BJ (cell line): ENCODE measurements at regions of chr6 and their contacts with region 1.

Region 1: GRCh38 chr6:36851149-36851614 is 11.9 kb upstream of the CPNE5 start:
- DNase-seq: peak; percentile 58
- H3K4me3 ChIP-seq: no peak overlapping the region
- H3K27me3 ChIP-seq: no peaks in the 10 kb centered on the region
- CTCF ChIP-seq: peak; percentile 73

Region 2: DNA sequence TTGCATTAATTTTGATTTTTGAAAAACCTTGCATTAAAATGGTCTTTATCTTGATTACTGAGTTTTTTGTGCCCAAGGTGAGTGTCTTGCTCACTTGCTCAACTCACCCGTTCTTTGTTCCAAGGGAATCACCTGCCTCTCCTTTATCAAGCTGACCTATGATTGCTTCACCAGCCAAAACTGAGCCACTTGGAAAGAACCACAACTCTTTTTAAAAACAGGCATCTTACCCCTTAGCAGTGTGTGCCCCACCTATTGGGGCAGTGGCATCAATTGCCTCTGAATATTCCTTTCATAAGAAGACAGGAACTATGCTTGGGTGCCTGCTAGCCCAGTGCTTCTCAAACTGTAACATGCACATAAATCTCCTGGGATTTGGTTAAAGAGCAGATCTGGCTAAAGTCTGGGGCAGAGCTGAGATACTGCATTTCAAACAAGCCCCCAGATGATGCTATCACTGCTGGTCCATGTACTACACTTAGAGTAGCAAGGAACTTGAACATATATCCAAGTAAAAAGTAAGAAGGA is 300.6 kb before region 1 on chr6:
- CTCF ChIA-PET with region 1: no interaction called
- POLR2A ChIA-PET with region 1: no interaction called
- DNase-seq: no peak
- H3K4me3 ChIP-seq: no peak overlapping the region
- H3K27me3 ChIP-seq: no peaks in the 10 kb centered on the region
- CTCF ChIP-seq: no peak

Region 3: GRCh38 chr6:36759148-36759759 is 91.9 kb before region 1 on chr6:
- CTCF ChIA-PET with region 1: interaction called, 194 read pairs
- POLR2A ChIA-PET with region 1: no interaction called
- DNase-seq: no peak
- H3K4me3 ChIP-seq: no peak overlapping the region
- H3K27me3 ChIP-seq: peaks cover 2% of the 10 kb centered on the region
- CTCF ChIP-seq: peak; percentile 100

Region 4: DNA sequence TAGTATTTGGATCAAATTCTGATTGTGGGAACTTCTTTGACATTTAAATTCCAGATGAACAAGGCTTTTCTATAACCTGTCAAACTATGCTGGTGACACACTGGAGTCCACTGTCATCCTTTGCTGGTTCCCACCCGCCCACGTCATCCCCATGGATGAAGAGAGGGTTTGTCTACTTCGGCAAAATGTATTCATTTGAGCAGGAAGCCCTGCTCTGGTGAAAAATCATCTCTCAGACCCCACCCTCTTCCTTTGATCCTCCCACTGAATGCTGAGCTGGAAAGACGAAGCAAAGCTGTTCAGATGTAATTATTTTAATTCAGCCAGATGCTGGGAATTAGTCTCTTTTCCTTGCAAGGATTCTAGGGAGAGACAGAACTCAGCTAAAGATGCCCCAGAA is 62.4 kb before region 1 on chr6:
- CTCF ChIA-PET with region 1: interaction called, 18 read pairs
- POLR2A ChIA-PET with region 1: no interaction called
- DNase-seq: no peak
- H3K4me3 ChIP-seq: no peak overlapping the region
- H3K27me3 ChIP-seq: peaks cover 27% of the 10 kb centered on the region
- CTCF ChIP-seq: no peak

Region 5: DNA sequence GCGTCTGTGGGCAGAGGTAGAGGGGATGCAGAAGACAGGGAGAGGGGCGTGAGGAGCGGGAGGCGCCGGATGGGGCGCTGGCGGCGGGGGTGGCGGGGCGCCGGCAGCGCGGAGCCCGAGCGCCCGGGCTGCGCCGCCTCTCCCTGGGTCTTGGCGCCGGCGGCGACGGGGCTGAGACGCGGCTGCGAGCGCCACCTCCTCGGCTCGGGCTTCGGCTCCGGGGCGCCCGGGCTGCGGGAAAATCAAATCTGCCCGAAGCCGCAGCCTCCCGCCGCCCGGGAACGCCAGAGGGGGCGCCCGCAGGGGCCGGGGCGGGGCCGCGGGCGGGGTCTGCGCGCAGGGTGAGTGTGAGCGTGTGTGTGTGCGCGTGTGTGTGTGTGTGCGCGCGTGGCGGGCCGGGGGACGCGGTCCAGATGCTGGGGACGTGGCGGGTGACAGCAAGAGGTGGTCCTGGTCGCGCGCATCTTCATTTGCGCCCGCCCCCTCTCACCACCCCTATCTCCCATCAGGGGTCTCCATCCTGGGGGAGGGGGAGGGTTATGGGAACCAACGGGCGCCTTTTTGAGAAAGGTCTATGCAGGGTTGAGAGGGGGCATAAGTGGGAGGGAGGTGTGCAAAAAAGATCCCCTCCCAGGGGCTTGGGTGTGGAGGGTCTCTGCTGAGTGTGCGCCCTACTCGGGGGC is 11.3 kb before region 1 on chr6:
- CTCF ChIA-PET with region 1: interaction called, 11 read pairs
- POLR2A ChIA-PET with region 1: no interaction called
- DNase-seq: no peak
- H3K4me3 ChIP-seq: peak overlapping the region; percentile 48
- H3K27me3 ChIP-seq: peaks cover 23% of the 10 kb centered on the region
- CTCF ChIP-seq: no peak

Region 6: DNA sequence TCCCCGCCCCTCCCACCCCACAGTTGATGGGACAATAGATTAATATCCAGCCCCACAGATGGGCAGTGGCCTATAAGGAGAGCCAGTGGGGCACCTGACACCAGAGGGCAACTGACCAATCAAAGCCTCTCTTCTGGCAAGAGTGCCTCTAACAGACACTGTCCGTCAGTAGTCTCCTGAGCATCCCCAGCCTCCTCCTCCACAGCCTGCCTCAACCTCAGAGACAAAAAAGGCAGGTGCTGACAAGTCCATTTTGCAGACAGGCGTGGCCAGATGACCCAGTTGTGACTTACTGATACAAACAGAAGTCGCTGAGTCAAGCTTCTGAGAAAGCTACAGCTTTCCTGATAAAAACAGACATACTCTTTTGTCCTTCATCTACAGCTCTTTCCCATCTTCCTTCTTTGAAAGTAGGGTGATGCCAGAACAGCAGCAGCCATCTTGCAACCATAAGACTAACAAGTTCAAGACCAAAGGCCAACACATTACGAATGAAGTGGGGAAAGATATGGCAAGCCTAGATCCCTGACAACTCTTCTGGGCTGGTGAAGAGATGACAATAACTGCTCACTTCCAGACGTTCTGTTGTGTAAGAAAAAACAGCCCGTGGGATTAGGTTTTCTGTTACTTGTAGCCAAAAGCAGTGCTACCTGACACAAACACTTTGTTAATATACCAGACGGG is 11.1 kb after region 1 on chr6:
- CTCF ChIA-PET with region 1: interaction called, 10 read pairs
- POLR2A ChIA-PET with region 1: no interaction called
- DNase-seq: no peak
- H3K4me3 ChIP-seq: no peak overlapping the region
- H3K27me3 ChIP-seq: no peaks in the 10 kb centered on the region
- CTCF ChIP-seq: no peak

Region 7: DNA sequence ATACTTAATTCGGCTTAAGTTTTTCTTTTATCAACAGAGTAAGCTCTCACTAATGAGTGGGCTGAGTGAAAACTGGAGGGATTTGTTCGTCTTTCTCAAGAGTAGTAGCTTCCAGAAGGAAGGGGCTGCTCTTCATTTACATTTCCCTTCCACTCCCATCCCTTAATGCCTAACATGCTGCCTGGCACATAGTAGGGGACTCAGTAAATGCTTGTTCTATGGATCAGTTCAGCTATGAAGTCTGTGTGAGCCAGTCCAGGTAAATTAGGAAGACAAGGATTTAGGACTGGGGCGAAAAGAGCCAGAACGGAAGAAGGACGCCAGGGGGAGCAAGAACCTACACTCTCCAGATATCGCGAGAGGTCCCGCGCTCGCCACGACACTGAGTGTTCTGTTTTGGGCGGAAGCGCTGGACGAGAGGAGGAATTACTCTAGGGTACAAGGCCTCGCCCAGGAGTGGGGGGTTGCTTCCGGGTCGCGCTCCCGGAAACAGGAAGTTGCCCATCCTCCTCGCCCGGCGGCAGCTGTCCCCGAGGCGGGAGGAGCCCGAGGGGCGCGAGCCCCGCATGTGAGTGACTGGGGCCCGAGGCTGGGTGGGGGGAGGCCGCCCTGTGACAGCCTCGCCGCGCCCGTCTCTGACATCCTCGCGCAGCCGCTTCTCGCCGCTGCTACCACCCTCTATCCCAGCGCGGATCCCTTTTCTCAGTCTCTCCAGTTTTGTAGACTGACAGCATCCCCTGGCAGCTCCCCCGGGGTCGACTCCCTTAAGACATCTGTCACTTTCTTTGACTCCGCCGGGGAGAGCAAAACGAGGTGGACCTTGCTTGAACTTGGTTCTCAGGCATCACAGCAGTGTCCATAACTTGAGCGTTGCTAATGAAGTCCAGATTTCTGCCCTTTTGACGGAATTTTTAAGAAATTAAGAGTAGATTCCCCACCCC is 34.5 kb after region 1 on chr6 and contains the start of gene C6orf89:
- CTCF ChIA-PET with region 1: interaction called, 13 read pairs
- POLR2A ChIA-PET with region 1: no interaction called
- DNase-seq: peak; percentile 75
- H3K4me3 ChIP-seq: peak within 1 kb of the TSS; percentile 68
- H3K27me3 ChIP-seq: no peaks in the 10 kb centered on the region
- CTCF ChIP-seq: peak; percentile 86
- polyA plus RNA-seq, gene C6orf89: 66.0 and 71.4 TPM in 2 replicates

Region 8: GRCh38 chr6:36912586-36912985 is 61.4 kb after region 1 on chr6:
- CTCF ChIA-PET with region 1: no interaction called
- POLR2A ChIA-PET with region 1: interaction called, 17 read pairs
- DNase-seq: peak; percentile 84
- H3K4me3 ChIP-seq: no peak overlapping the region
- H3K27me3 ChIP-seq: no peaks in the 10 kb centered on the region
- CTCF ChIP-seq: no peak

Region 9: DNA sequence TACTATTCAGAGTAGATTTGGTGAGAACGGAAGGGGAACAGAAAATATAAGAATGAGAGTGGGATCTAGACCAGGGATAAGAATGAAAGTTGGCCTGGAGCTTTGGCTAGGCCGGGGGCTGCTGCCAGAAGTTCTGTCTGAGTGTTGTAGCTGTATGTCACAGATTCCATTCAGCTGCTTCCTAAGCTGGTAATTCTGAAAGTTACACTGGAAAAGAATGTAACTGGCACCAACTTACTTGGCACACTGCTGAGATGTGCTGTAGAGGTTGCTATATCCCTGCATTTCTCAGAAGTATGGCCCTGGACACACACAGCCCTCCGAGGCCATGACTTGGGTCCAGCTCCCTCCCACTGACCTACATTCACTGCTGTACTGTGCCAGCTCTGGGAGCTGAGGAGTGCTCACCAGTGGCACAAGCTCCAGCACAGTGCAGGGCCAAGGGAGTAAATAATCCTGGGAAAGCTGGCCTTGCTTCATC is 432.5 kb after region 1 on chr6:
- CTCF ChIA-PET with region 1: no interaction called
- POLR2A ChIA-PET with region 1: no interaction called
- DNase-seq: no peak
- H3K4me3 ChIP-seq: no peak overlapping the region
- H3K27me3 ChIP-seq: no peaks in the 10 kb centered on the region
- CTCF ChIP-seq: no peak